ENCODE measurements at regions of chr7 and their contacts with region 1.

Region 1: GRCh38 chr7:17856251-17856650 is 84.0 kb downstream of the SNX13 start:
- DNase-seq: no peak
- ATAC-seq: no peak
- H3K4me3 ChIP-seq: no peak overlapping the region
- H3K4me3 Mint-ChIP-seq: no peak overlapping the region
- H3K27ac ChIP-seq: no peak overlapping the region
- H3K27ac Mint-ChIP-seq: no peak overlapping the region
- H3K4me1 ChIP-seq: no peaks in the 10 kb centered on the region
- H3K4me1 Mint-ChIP-seq: peaks cover 10% of the 10 kb centered on the region
- H3K27me3 ChIP-seq: no peaks in the 10 kb centered on the region
- H3K27me3 Mint-ChIP-seq: no peaks in the 10 kb centered on the region
- CTCF ChIP-seq: no peak

Region 2: GRCh38 chr7:17871815-17872533 is 15.7 kb after region 1 on chr7:
- CTCF ChIA-PET with region 1: no interaction called
- POLR2A ChIA-PET with region 1: no interaction called
- intact Hi-C with region 1: no loop called
- DNase-seq: no peak
- ATAC-seq: no peak
- H3K4me3 ChIP-seq: no peak overlapping the region
- H3K4me3 Mint-ChIP-seq: no peak overlapping the region
- H3K27ac ChIP-seq: no peak overlapping the region
- H3K27ac Mint-ChIP-seq: no peak overlapping the region
- H3K4me1 ChIP-seq: no peaks in the 10 kb centered on the region
- H3K4me1 Mint-ChIP-seq: no peaks in the 10 kb centered on the region
- H3K27me3 ChIP-seq: no peaks in the 10 kb centered on the region
- H3K27me3 Mint-ChIP-seq: no peaks in the 10 kb centered on the region
- CTCF ChIP-seq: no peak

Region 3: DNA sequence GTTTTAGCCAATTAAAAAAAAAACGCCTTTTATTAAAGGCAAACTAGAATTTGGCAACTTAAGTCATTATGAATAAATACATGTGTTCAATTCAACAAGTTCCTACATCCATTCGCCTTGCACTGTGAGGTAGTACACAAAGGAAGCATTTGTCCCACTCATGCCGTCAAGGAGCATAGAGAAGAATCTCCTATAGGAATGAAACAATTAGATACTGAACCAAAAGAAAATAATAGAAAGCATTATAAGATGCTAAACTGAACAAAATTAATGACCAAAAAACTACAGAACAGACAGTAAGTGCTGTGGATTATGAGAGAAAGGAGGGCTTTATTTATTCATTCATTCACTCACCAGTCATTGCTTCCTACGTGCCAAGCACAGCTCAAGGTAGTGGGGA is 41.9 kb after region 1 on chr7:
- CTCF ChIA-PET with region 1: no interaction called
- POLR2A ChIA-PET with region 1: no interaction called
- intact Hi-C with region 1: loop called in 1 of 2 experiments (anchors 2 kb)
- DNase-seq: no peak
- ATAC-seq: no peak
- H3K4me3 ChIP-seq: no peak overlapping the region
- H3K4me3 Mint-ChIP-seq: no peak overlapping the region
- H3K27ac ChIP-seq: no peak overlapping the region
- H3K27ac Mint-ChIP-seq: no peak overlapping the region
- H3K4me1 ChIP-seq: no peaks in the 10 kb centered on the region
- H3K4me1 Mint-ChIP-seq: peaks cover 18% of the 10 kb centered on the region
- H3K27me3 ChIP-seq: no peaks in the 10 kb centered on the region
- H3K27me3 Mint-ChIP-seq: no peaks in the 10 kb centered on the region
- CTCF ChIP-seq: no peak